Left cardiac atrium (tissue), 4 donors: ENCODE measurements at regions of chr15 and their contacts with region 1.

Region 1: GRCh38 chr15:92383519-92384326 is 10.0 kb upstream of the ST8SIA2 start:
- DNase-seq: no peak
- ATAC-seq: no peak

Region 2: DNA sequence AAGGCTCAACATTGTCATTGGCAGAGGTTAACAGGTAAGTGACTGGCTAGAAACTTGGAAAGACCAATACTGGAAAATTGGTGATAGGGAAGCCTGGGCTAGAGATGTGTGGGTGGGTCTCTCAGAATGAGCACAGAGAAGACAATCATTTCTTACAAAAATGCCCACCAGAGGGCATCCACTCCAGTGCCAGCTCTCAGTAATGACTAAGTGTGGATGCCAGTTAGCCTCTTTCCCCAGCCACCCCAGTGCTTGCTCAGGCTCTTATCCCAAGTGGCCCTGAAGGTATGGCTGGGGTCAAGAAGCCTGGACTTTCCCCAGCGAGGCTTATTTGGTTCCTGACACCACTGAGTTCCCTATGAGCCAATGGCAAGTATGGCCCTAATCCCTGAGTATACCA is 105.9 kb before region 1 on chr15:
- intact Hi-C with region 1: loop called (anchors 5 to 10 kb)
- DNase-seq: no peak
- ATAC-seq: peak; percentile 55 to 76

Region 3: DNA sequence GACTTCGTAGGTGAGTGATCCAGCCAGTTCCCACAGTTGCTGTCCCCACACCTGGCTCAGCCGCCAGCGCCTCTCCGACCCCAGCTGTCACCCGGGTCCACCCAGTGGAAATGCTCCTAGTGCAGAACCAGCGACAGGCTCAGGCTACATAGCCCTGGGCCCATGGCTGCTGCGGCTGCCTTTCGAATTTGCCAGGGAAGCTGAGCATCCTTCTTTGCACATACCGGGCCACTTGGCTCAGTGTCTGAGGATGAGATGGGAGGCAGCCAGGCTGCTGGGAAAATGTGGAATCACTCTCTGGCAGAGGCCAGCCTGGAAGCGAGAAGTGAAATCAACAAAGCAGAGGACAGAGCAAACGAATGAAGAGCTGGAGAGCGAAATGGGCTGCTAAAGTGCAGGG is 90.0 kb after region 1 on chr15:
- intact Hi-C with region 1: no loop called
- DNase-seq: no peak
- ATAC-seq: no peak

Region 4: GRCh38 chr15:92510163-92510882 is 126.6 kb after region 1 on chr15:
- intact Hi-C with region 1: no loop called
- DNase-seq: no peak
- ATAC-seq: no peak

Region 5: DNA sequence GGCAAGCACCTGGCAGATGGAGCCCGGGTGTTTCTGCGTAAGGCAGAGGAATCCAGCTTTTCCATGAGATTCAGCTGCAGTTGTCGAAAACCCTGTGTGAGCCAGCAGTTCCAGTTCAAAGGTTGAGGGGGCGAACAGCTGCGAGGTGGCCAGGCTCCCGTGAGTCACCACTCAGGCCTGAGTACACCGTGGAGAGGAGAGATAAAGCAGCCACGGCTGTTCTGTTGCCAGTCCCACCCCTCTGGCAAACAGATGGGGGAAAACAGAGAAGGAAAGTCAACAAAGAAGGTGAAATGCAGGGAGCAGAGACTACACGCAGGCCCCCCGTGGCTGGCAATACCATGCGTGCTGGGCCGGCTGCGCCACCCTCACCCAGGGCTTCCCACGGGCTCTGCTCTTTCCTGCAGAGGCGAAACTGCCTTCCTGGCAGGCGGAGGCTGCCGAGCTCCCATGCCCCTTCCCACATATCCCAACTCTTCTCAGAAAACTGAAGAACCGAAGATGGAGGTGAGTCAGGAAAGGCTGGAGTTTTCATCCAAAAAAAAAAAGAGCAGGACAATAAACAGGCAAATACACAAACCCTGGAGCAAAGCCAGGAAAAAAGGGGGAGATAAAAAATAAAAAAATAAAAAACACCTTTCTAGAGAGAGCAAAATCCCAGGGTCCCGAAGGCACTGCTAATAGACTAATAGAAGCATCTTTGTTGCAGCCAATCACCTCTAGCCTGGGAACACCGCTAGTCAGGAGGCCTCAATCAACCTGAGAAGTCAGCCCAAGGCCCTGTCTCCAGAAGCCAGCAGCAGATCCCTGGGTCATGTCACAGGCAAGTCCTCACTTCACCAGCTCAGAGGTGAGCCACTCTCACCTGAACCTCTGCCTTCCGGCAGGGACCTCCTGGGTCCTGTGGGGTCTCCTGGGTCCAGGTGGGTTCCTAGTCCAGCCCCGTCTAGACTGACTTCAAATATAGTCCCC is 234.1 kb after region 1 on chr15:
- intact Hi-C with region 1: no loop called
- DNase-seq: peak; percentile 78
- ATAC-seq: peak; percentile 82 to 97